Panc1 (cell line): ENCODE measurements at regions of chr6 and their contacts with region 1.

Region 1: GRCh38 chr6:134908906-134909516 is 40.9 kb downstream of the ALDH8A1 start:
- DNase-seq: peak; percentile 90
- ATAC-seq: peak; percentile 92
- H3K4me3 ChIP-seq: peak overlapping the region; percentile 14 to 46
- H3K27ac ChIP-seq: peak overlapping the region; percentile 71
- H3K4me1 ChIP-seq: peaks cover 13% of the 10 kb centered on the region
- H3K27me3 ChIP-seq: no peaks in the 10 kb centered on the region
- CTCF ChIP-seq: no peak

Region 2: DNA sequence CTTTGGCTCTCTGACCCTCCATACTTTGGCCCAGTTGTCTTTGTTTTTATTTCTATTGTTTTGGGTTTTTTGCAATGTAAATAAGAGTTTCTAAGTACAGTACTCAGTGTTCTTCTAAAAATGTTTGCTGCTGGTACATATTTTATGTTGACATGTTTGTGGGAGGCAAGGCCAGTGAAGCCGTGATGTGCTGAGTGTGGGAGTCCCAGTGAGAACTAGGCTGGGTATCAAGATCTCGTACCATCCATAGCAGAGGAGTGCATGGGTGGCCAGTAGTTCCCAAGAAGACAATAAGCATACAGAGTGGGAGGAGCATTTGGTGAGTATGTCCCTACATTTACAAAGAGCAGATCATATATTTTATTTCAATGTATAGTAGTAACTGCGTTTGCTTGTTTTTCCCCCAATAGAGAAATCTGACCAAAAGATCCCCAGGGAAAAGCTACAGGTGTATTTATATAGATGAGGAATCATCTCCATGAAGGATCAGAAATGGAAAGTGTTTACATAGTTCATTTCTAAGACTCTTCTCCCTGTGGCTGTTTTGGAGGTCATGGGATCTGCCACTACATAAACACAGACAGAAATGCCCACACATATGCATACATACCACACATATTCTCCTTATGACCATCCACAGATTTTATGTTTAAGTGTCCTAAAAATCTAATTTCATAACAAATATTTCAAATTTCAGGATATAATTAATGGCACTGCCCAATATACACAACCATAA is 245.0 kb before region 1 on chr6:
- CTCF ChIA-PET with region 1: no interaction called
- POLR2A ChIA-PET with region 1: no interaction called
- in situ Hi-C with region 1: no loop called
- intact Hi-C with region 1: no loop called
- DNase-seq: no peak
- ATAC-seq: no peak
- H3K4me3 ChIP-seq: no peak overlapping the region
- H3K27ac ChIP-seq: no peak overlapping the region
- H3K4me1 ChIP-seq: no peaks in the 10 kb centered on the region
- H3K27me3 ChIP-seq: no peaks in the 10 kb centered on the region
- CTCF ChIP-seq: no peak

Region 3: GRCh38 chr6:134925800-134926199 is 16.8 kb after region 1 on chr6:
- CTCF ChIA-PET with region 1: no interaction called
- POLR2A ChIA-PET with region 1: interaction called, 13 read pairs
- in situ Hi-C with region 1: no loop called
- intact Hi-C with region 1: no loop called
- DNase-seq: no peak
- ATAC-seq: no peak
- H3K4me3 ChIP-seq: no peak overlapping the region
- H3K27ac ChIP-seq: no peak overlapping the region
- H3K4me1 ChIP-seq: no peaks in the 10 kb centered on the region
- H3K27me3 ChIP-seq: no peaks in the 10 kb centered on the region
- CTCF ChIP-seq: no peak

Region 4: DNA sequence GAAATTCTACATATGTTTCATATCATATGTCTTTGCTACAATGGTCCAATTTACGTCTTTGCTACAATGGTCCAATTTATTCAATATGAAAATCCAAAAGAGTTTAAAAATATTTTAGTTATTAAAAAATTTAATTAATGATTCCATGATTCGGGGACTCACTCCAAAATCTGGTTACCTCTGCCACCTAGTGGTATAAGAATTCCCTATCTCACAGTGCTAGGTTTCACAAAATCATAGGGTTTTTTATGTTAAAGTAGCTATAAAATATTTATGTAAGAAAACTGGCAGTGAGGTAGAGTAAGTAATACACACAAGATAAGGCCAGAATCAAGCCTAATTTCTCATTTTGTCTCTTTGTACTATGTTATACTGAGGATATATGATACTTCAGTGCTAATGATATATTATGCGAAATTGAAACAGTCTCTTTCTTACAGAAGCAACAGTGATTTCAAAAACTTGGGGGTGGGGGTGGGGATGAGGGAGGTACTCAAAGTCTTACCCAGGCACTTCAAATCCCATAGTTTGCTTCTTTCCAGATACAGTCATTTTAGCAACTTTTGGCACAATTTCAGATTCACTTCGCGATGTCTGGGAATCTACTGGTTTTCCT is 93.3 kb after region 1 on chr6:
- CTCF ChIA-PET with region 1: no interaction called
- POLR2A ChIA-PET with region 1: no interaction called
- in situ Hi-C with region 1: no loop called
- intact Hi-C with region 1: no loop called
- DNase-seq: no peak
- ATAC-seq: no peak
- H3K4me3 ChIP-seq: no peak overlapping the region
- H3K27ac ChIP-seq: no peak overlapping the region
- H3K4me1 ChIP-seq: no peaks in the 10 kb centered on the region
- H3K27me3 ChIP-seq: no peaks in the 10 kb centered on the region
- CTCF ChIP-seq: peak; percentile 69; the same call in 1 of the 2 replicates